ENCODE measurements at regions of chrX and their contacts with region 1.

Region 1: GRCh38 chrX:69222103-69223090 is 57.1 kb upstream of the PJA1 start:
- DNase-seq: peak; percentile 48 to 76 (median 68)
- H3K4me3 ChIP-seq: no peak overlapping the region
- H3K27ac ChIP-seq: no peak overlapping the region
- H3K4me1 ChIP-seq: no peaks in the 10 kb centered on the region
- H3K27me3 ChIP-seq: peaks cover 22% of the 10 kb centered on the region
- CTCF ChIP-seq: peak; percentile 61 to 87 (median 72)
- POLR2A ChIP-seq: no peak

Region 2: GRCh38 chrX:68794461-68794860 is 427.9 kb before region 1 on chrX:
- intact Hi-C with region 1: no loop called
- DNase-seq: no peak
- H3K4me3 ChIP-seq: no peak overlapping the region
- H3K27ac ChIP-seq: no peak overlapping the region
- H3K4me1 ChIP-seq: no peaks in the 10 kb centered on the region
- H3K27me3 ChIP-seq: peaks cover 20% of the 10 kb centered on the region
- CTCF ChIP-seq: no peak
- POLR2A ChIP-seq: no peak

Region 3: GRCh38 chrX:69093960-69094871 is 128.2 kb before region 1 on chrX:
- intact Hi-C with region 1: loop called in 1 of 2 experiments (anchors 5 kb)
- DNase-seq: peak; percentile 31 to 70 (median 46)
- H3K4me3 ChIP-seq: no peak overlapping the region
- H3K27ac ChIP-seq: no peak overlapping the region
- H3K4me1 ChIP-seq: no peaks in the 10 kb centered on the region
- H3K27me3 ChIP-seq: peaks cover 15% of the 10 kb centered on the region
- CTCF ChIP-seq: peak in 5 of 6 experiments; percentile 28 to 61 (median 50)
- POLR2A ChIP-seq: no peak

Region 4: GRCh38 chrX:69116077-69116476 is 106.3 kb before region 1 on chrX:
- intact Hi-C with region 1: no loop called
- DNase-seq: no peak
- H3K4me3 ChIP-seq: no peak overlapping the region
- H3K27ac ChIP-seq: no peak overlapping the region
- H3K4me1 ChIP-seq: no peaks in the 10 kb centered on the region
- H3K27me3 ChIP-seq: peaks cover 23% of the 10 kb centered on the region
- CTCF ChIP-seq: no peak
- POLR2A ChIP-seq: no peak

Measured in adrenal gland (tissue), 19 donors.